ENCODE measurements at regions of chr4 and their contacts with region 1.

Region 1: DNA sequence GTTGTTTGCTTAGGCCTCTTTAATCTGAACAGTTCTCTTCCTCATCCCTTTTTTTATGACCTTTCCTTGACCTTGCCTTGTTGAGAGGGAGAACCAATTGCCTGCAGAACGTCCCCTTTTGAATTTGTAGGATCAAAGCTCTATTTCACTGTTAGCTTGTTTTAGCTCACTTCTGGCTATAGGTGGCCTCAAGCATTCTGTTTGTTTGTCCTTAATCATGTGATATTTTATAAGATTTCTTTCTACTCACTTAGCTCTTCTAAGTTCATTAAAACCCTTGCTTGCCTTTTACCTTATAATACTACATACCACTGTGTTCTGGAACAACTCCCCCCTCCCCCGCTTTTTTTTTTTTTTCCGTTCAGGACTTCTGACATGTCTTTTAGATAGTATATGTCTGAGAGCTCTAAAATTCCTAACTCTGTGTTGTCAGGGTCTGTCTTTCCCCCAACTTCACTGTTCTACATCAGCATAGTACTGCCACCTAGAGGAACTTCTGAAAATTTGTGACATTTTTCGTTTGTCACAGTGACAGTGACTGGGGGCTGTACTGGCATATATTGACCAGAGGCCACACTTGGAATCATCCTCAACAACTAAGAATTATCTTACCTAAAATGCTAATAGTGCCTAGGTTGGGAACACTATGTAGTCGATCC is 128.5 kb downstream of the LARP7 start:
- DNase-seq: peak in 2 of 5 donors; percentile 48 to 52
- H3K4me3 ChIP-seq: no peak overlapping the region
- H3K27ac ChIP-seq: no peak overlapping the region
- H3K4me1 ChIP-seq: no peaks in the 10 kb centered on the region
- H3K27me3 ChIP-seq: no peaks in the 10 kb centered on the region
- CTCF ChIP-seq: peak; percentile 20

Region 2: DNA sequence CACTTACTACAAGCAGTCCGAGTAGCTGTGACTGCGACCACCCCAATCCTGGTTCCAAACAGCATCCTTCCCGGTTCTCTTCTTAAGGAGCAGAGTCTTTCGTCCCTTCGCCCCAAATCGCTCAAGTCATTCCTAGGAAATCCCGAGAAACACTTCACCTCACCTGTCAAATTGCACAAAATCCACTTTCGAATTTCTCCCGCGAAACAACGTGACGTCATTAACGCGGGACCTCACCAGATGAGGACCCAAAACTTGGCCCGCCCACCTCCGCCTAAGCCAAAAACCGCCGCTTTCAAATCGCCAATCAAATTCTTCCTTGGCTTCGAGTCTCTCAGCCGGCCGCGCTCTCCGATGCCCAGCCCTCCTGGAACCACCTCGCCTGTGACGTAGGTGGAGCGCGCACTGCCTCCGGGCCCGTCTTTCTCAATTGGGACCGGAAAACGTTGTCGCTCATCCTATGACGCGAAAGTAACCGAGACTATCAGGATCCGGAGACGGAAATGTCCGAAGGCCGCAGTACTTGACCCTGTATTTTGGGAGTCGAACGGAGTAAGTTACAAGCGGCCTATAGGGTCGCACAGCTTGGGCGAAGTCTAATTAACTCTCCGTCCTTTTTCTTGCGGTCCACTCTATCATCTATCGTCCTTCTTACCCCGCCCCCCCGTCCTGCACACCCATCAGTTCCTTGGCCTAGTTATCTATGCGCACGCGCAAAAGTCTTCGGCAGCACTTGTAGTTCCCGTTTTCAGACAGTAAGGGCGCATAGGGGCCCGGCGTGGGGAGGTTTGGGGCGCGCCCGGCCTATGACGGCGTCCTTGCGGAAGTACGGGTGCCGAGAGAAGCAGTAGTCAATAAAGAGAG is 128.5 kb before region 1 on chr4 and contains the starts of genes LARP7 and ZGRF1:
- intact Hi-C with region 1: loop called (anchors 10 kb)
- DNase-seq: peak; percentile 99 to 100 (median 99)
- H3K4me3 ChIP-seq: peak within 1 kb of the TSS; percentile 98 to 99 (median 99)
- H3K27ac ChIP-seq: peak within 1 kb of the TSS; percentile 96 to 97
- H3K4me1 ChIP-seq: peaks cover 0 to 11% (median 9%) of the 10 kb centered on the region in 3 donors
- H3K27me3 ChIP-seq: no peaks in the 10 kb centered on the region
- CTCF ChIP-seq: peak; percentile 58
- total RNA-seq, gene LARP7: 45.5 TPM
- total RNA-seq, gene ZGRF1: 3.6 TPM

Region 3: DNA sequence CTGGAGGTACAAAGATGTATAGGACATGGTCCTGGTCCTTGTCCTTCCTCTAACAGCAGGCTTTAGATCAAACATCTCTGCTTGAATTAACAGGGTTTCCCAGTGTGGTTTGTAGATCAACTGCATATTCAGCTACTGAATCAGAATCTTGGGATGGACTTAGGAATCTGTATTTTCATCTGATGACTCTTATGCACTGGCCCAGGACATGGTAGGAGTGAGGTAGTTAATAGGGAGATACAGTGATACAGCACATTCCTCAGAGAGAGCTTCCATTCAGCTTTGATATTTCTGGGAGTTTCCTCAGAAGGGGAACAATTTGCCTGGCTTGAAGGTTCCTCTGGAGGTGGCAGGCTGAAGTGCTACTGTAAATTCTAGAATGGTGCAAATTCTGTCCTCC is 74.6 kb after region 1 on chr4:
- intact Hi-C with region 1: no loop called
- DNase-seq: no peak
- H3K4me3 ChIP-seq: no peak overlapping the region
- H3K27ac ChIP-seq: no peak overlapping the region
- H3K4me1 ChIP-seq: no peaks in the 10 kb centered on the region
- H3K27me3 ChIP-seq: no peaks in the 10 kb centered on the region
- CTCF ChIP-seq: no peak

Region 4: DNA sequence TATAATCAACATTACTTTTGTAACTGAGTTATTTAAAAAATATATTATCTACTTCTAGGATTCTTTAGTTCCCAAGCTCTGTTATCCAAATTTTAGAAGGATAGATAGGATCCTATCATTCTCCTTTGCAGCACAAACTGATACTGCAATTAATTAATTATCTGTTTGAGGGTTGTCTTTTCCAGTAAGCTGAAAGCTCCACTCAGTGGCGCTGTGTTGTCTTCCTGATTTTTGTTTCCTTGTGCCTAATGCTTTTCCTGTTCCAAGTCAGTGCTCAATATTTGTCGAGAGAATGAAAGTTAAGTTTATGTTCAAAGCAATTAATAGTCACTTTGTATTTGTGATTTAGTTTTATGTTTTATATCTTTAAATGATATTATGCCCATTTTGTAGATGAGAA is 176.6 kb after region 1 on chr4:
- intact Hi-C with region 1: no loop called
- DNase-seq: no peak
- H3K4me3 ChIP-seq: no peak overlapping the region
- H3K27ac ChIP-seq: no peak overlapping the region
- H3K4me1 ChIP-seq: no peaks in the 10 kb centered on the region
- H3K27me3 ChIP-seq: no peaks in the 10 kb centered on the region
- CTCF ChIP-seq: no peak

Region 5: DNA sequence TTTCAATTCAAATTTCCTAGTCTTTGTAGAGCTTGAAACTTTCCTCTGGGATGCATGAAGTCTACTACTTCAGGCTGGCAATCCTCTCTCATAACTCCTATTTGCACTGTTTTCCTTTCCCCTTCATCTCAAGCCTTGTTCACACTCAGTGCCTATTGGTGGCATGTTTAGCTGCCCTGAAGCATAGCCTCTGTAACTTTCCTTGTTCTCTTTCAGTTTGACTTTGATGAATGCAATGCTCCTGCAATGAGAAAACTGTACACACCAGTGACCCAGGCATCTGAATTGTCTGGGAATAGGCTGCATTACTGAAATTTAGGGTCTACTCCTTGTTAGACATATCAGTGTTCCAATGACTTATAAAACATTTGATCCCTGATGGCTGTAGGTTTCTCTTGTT is 365.7 kb after region 1 on chr4:
- intact Hi-C with region 1: no loop called
- DNase-seq: peak in 2 of 5 donors; percentile 60 to 61
- H3K4me3 ChIP-seq: no peak overlapping the region
- H3K27ac ChIP-seq: no peak overlapping the region
- H3K4me1 ChIP-seq: no peaks in the 10 kb centered on the region
- H3K27me3 ChIP-seq: no peaks in the 10 kb centered on the region
- CTCF ChIP-seq: no peak

Region 6: DNA sequence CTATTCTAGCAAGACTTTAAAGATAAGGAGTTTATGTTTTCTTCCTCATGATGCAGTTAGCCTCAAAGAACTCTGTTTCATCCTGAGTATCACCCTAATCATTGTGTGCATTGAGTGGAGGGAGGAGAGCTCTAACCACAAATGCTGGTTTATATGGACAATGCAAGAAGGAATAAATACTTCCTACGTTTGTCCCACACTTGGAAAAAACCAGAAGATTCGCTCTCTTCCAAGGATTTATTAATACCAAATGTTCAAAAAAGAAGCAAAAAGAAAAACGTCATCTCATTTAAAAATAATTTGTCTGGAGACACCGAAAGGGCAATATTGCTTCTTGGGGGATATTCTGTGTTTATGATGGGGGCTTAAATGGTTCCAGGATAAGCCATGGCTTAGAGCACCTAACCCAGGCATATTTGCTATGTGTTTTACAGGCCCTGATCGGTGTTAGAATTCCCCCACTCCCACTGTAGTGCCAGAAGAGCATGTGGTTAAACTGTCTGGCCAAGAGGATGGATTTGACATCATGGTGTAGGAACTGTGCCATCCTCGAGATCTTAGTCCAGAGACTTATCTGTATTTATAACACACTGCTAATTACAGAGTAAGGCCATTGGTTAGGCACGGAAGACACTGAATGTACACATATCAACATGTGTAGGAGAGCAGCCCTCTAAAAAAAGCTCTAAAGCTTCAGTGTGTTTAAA is 511.2 kb after region 1 on chr4:
- intact Hi-C with region 1: no loop called
- DNase-seq: no peak
- H3K4me3 ChIP-seq: no peak overlapping the region
- H3K27ac ChIP-seq: no peak overlapping the region
- H3K4me1 ChIP-seq: peaks cover 0 to 2% (median 0%) of the 10 kb centered on the region in 3 donors
- H3K27me3 ChIP-seq: no peaks in the 10 kb centered on the region
- CTCF ChIP-seq: no peak